T-cell (primary cell): ENCODE measurements at regions of chr7 and their contacts with region 1.

Region 1: GRCh38 chr7:104964626-104965236 is 49.3 kb upstream of the KMT2E start:
- DNase-seq: no peak
- ATAC-seq: no peak
- H3K4me3 ChIP-seq: no peak overlapping the region
- H3K4me3 Mint-ChIP-seq: no peak overlapping the region
- H3K27ac ChIP-seq: no peak overlapping the region
- H3K27ac Mint-ChIP-seq: peak overlapping the region in 1 of 2 donors; percentile 22
- H3K4me1 ChIP-seq: peaks cover 0 to 2% of the 10 kb centered on the region in 2 experiments
- H3K4me1 Mint-ChIP-seq: peaks cover 0 to 9% (median 4%) of the 10 kb centered on the region in 3 donors
- H3K27me3 ChIP-seq: no peaks in the 10 kb centered on the region
- H3K27me3 Mint-ChIP-seq: no peaks in the 10 kb centered on the region

Region 2: GRCh38 chr7:104767826-104768536 is 196.8 kb before region 1 on chr7:
- CTCF ChIA-PET with region 1: no interaction called
- POLR2A ChIA-PET with region 1: no interaction called
- DNase-seq: no peak
- ATAC-seq: no peak
- H3K4me3 ChIP-seq: no peak overlapping the region
- H3K4me3 Mint-ChIP-seq: no peak overlapping the region
- H3K27ac ChIP-seq: no peak overlapping the region
- H3K27ac Mint-ChIP-seq: no peak overlapping the region
- H3K4me1 ChIP-seq: no peaks in the 10 kb centered on the region
- H3K4me1 Mint-ChIP-seq: no peaks in the 10 kb centered on the region
- H3K27me3 ChIP-seq: peaks cover 0 to 7% of the 10 kb centered on the region in 2 experiments
- H3K27me3 Mint-ChIP-seq: peaks cover 7 to 27% of the 10 kb centered on the region in 2 donors

Region 3: DNA sequence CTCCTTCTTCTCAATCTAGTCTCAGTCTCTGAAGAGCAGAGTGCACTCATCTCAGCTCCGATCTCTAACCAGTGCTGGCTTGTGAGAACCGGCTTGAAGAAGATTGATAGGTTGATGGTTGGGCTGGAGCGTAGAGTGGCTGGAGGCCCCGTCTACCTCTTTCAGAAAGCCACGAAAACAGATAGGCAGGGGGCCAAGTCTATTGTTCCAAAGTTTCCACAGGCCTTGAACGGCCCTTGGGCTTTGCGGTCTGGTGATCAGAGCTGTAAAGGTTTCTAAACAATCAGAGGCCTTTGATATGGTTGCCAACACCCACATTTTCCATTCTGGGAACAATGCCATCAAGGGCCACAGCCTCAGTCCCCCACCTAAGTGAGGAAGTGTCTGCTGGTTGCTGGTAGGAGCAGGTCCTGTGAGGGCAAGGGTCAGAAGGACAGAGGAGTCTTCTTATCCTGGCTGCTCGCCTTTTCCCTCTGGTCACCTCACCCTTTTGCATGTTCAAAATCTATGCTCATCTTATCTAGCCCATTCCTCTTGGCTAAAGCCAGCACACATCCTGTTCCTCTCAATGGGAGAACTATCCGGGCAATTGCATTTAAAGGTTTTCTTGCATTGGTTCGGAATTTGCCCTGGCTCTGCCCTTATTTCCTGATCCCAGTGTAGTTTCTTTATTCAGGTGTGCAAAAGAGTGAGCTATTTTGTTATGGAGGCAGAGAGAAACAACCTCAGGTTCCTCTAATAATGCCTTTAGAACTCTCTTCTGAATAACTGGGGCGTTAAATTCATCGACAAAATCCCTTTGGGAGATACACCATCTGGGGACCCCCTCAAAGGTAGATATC is 21.0 kb before region 1 on chr7:
- CTCF ChIA-PET with region 1: interaction called, 3 read pairs
- POLR2A ChIA-PET with region 1: interaction called in 1 of 2 experiments, 14 read pairs
- DNase-seq: peak; percentile 25 to 80 (median 58)
- ATAC-seq: peak; percentile 19 to 47 (median 43)
- H3K4me3 ChIP-seq: peak overlapping the region; percentile 8 to 24
- H3K4me3 Mint-ChIP-seq: peak overlapping the region; percentile 81 to 96 (median 85)
- H3K27ac ChIP-seq: peak overlapping the region; percentile 99
- H3K27ac Mint-ChIP-seq: peak overlapping the region; percentile 99 to 100
- H3K4me1 ChIP-seq: peaks cover 30 to 65% of the 10 kb centered on the region in 2 experiments
- H3K4me1 Mint-ChIP-seq: peaks cover 66 to 74% (median 67%) of the 10 kb centered on the region in 3 donors
- H3K27me3 ChIP-seq: no peaks in the 10 kb centered on the region
- H3K27me3 Mint-ChIP-seq: no peaks in the 10 kb centered on the region

Region 4: GRCh38 chr7:105003275-105003674 is 38.5 kb after region 1 on chr7:
- CTCF ChIA-PET with region 1: interaction called in 1 of 2 experiments, 3 read pairs
- POLR2A ChIA-PET with region 1: interaction called, 6 to 13 read pairs
- DNase-seq: peak in 2 of 35 experiments; percentile 40 to 54
- ATAC-seq: peak; percentile 54 to 83 (median 74)
- H3K4me3 ChIP-seq: no peak overlapping the region
- H3K4me3 Mint-ChIP-seq: peak overlapping the region; percentile 62 to 69 (median 68)
- H3K27ac ChIP-seq: peak overlapping the region; percentile 13
- H3K27ac Mint-ChIP-seq: peak overlapping the region; percentile 81 to 83
- H3K4me1 ChIP-seq: peaks cover 55 to 59% of the 10 kb centered on the region in 2 experiments
- H3K4me1 Mint-ChIP-seq: peaks cover 90 to 94% (median 93%) of the 10 kb centered on the region in 3 donors
- H3K27me3 ChIP-seq: no peaks in the 10 kb centered on the region
- H3K27me3 Mint-ChIP-seq: no peaks in the 10 kb centered on the region

Region 5: DNA sequence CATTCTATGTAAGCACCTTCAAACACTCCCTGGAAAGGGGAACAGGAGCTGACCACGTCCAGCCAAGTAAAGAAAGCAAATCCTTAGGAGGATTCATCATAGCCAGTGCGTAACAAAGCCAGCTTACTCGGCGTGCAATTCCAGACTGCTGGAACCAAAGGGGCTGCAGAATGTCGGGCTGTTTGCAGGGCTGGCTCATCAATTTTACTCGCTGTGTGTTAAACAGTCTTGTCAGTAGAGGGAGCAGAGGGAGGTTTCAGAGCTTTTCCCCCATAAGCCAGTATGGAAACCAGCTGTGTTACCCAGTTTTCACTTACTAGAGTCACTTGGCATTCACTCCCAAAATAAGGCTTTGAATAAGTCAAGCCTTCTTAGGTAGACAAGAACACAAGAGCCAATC is 176.3 kb after region 1 on chr7:
- CTCF ChIA-PET with region 1: no interaction called
- POLR2A ChIA-PET with region 1: interaction called in 1 of 2 experiments, 11 read pairs
- DNase-seq: peak in 1 of 35 experiments; percentile 27
- ATAC-seq: no peak
- H3K4me3 ChIP-seq: no peak overlapping the region
- H3K4me3 Mint-ChIP-seq: no peak overlapping the region
- H3K27ac ChIP-seq: no peak overlapping the region
- H3K27ac Mint-ChIP-seq: no peak overlapping the region
- H3K4me1 ChIP-seq: no peaks in the 10 kb centered on the region
- H3K4me1 Mint-ChIP-seq: peaks cover 6 to 14% (median 11%) of the 10 kb centered on the region in 3 donors
- H3K27me3 ChIP-seq: no peaks in the 10 kb centered on the region
- H3K27me3 Mint-ChIP-seq: no peaks in the 10 kb centered on the region